Head of caudate nucleus (tissue), 42 donors: ENCODE measurements at regions of chr15 and their contacts with region 1.

Region 1: DNA sequence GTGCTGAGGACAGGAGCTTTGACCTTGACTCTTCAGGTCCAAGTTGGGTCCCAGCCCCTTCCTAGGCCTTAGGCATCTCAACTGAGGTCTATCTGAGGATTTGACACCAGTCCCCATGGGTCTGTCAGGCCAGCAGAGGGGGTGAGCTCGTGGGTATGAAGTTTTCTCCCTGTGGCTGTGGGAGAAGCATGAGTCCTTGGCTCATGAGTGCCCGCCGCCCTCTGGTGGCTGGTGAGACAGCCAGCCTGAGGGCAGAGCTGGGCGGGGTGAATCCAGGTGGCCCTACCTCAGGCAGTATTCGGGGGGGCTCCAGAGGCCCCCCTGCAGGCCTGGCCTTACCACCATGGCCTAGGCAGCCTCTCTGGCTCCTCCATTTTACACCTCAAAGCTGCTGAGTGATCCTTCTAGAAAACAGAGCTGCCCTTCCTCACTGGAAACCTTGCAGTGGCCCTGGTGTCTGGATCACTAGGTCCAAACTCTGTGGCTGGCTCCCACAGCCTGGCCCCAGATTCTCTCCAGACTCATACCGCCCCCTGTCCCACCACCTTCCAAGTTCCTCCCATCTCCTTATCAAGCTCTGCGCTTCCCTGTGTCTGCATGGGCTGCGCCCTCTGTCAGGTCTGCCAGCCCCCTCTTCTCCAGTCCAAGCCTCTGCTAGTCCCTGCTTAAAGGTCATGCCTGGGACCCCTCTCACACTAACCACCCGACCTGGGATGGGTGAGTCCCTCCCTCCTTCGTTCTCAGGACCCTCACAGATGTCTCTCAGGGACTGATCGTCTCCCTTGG is 16.1 kb downstream of the SH2D7 start:
- DNase-seq: peak; percentile 67 to 91 (median 83)

Region 2: GRCh38 chr15:77966540-77967290 is 141.8 kb before region 1 on chr15:
- intact Hi-C with region 1: loop called (anchors 2 kb)
- DNase-seq: peak; percentile 36 to 87 (median 68)

Region 3: DNA sequence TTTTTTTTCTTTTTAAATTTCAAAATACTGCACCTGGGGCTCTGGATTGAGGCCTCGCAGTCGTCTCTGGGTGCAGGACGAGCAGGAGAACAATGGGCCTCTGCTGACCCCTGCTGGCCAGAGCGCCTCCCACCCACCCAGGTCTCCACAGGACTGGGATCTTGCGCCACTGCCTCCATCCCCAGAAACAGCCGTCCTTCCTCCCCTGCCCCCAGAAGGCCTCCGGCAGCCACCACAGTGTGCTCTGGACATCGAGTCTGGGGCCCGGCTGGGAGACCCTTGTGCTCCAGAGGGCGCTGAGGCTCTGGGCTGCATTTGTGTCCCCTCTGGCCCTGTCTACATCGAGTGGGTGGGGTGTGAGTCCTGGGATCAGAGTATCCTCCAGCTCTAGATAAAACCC is 132.5 kb after region 1 on chr15:
- intact Hi-C with region 1: loop called (anchors 5 kb)
- DNase-seq: peak; percentile 80 to 97 (median 92)